Activated CD8-positive, alpha-beta T cell treated with anti-CD3 and anti-CD28 coated beads for 36 hours (primary cell): ENCODE measurements at regions of chr1 and their contacts with region 1.

Region 1: DNA sequence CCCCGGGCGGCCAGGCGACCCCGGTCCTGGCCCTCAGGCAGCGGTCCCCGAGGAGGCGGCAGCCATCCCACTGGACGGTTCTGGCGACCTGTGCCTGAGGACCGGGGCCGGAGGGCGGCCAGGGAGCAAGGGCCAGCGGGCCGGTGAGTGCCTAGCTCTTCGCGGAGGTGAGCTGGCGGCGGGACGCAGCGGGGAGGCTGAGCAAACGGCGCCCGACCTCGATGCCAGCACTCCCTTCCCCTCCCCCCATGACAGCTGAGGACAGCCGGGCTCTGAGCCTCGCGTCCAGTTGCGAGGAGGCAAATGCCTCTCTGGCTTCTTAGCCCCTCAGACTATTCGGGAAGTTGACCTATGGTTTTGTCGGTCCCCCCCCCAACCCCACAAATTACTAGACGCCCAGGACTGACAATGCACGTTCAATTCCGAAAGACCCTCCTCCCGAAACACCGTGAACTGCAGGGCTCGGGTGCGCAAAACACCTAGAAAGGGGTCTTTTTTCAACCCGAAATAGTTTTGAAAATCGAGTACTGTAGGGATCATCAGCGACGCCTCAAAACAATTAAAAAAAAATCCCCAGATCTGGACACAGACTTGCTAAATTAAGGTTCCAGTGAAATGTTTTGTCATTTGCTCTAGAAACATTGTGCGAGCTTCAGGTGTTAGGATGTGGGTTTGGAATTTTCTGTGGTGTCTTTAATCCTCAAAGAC is 8.3 kb downstream of the CDKN2C start:
- DNase-seq: peak; percentile 53
- ATAC-seq: peak; percentile 61
- H3K4me3 Mint-ChIP-seq: peak overlapping the region; percentile 78
- H3K27ac Mint-ChIP-seq: peak overlapping the region; percentile 63
- H3K4me1 Mint-ChIP-seq: peaks cover 21% of the 10 kb centered on the region
- H3K27me3 Mint-ChIP-seq: peaks cover 19% of the 10 kb centered on the region
- CTCF ChIP-seq: no peak

Region 2: GRCh38 chr1:50658459-50659076 is 319.7 kb before region 1 on chr1:
- CTCF ChIA-PET with region 1: no interaction called
- POLR2A ChIA-PET with region 1: no interaction called
- intact Hi-C with region 1: no loop called
- DNase-seq: no peak
- ATAC-seq: no peak
- H3K4me3 Mint-ChIP-seq: no peak overlapping the region
- H3K27ac Mint-ChIP-seq: no peak overlapping the region
- H3K4me1 Mint-ChIP-seq: peaks cover 4% of the 10 kb centered on the region
- H3K27me3 Mint-ChIP-seq: no peaks in the 10 kb centered on the region
- CTCF ChIP-seq: no peak

Region 3: DNA sequence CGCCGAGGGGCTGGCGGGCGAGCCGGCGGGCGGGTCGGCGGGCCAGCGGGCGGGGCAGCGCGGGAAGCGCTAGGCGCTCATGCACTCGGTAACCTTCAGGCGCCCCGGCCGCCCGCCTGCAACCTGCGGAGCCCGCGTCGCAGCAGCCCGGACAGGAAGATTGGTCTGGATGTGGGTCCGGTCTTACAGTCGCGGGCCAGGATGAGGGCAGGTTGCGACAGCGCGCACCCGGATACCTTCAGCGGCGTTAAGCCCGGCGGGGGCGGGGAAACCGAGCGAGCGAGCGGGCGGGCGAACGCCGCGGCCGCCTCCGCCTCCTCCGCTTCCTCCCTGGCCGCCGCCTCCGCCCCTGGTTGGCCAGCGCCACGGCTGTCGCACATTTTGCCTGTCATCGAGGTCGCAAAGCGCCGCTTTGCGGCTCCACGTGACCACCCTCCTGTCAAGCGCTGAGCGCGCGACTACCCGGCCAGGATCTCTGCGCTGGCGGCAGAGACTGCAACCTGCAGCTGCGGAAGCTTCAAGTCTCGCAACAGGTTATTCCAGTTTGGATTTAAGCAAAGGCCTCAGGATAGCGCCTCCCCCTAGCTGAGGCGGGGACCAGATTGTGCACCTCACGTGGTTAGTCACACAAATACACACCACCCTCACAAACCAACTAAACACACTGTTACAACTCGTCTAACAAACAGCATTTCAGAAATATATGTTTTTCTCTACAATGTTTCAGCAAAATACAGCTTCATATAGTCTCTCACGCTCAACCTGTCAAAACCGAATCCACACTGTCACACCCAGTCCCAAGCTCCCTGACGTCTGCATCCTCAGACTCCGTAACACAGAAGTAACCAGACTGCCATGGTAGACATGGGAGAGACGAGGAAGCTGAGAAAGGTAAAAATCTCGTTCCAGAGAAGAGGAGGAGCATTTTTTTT is 18.1 kb before region 1 on chr1 and contains the start of gene FAF1:
- CTCF ChIA-PET with region 1: interaction called, 5 read pairs
- POLR2A ChIA-PET with region 1: interaction called, 27 read pairs
- intact Hi-C with region 1: no loop called
- DNase-seq: peak; percentile 96
- ATAC-seq: peak; percentile 89
- H3K4me3 Mint-ChIP-seq: peak within 1 kb of the TSS; percentile 88
- H3K27ac Mint-ChIP-seq: peak within 1 kb of the TSS; percentile 91
- H3K4me1 Mint-ChIP-seq: peaks cover 21% of the 10 kb centered on the region
- H3K27me3 Mint-ChIP-seq: no peaks in the 10 kb centered on the region
- CTCF ChIP-seq: peak; percentile 23
- total RNA-seq, gene FAF1: 82.2 to 87.0 TPM

Region 4: DNA sequence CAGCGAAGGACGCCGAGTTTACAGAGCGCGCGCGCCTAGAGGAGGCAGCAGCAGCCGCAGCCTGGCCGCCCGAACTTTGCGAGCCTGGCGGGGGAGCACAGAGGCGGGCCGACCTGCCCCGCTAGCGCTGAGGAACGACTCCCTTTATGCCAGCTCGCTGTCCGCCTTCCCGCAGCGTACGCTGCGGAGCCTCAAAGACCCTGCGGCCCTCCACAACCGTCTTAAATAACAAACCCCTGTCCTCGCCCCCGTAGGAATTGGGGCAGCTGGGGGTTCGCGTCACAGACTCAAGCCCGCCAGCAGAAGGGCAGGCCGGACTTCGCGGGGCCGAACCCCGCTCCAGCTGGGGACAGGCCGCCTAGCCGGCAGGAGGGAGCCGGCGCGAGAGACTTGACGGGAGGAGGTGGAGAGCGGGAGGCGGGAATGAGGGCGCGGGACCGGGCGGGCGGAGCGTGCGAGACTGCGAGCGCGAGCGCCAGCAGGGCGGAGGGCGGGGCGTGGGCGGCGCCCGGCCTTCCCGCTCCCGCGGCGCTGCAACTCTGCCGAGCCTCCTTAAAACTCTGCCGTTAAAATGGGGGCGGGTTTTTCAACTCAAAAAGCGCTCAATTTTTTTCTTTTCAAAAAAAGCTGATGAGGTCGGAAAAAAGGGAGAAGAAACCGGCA is 10.0 kb before region 1 on chr1:
- CTCF ChIA-PET with region 1: interaction called, 5 read pairs
- POLR2A ChIA-PET with region 1: interaction called, 35 read pairs
- intact Hi-C with region 1: no loop called
- DNase-seq: peak; percentile 82
- ATAC-seq: peak; percentile 80
- H3K4me3 Mint-ChIP-seq: peak overlapping the region; percentile 88
- H3K27ac Mint-ChIP-seq: peak overlapping the region; percentile 96
- H3K4me1 Mint-ChIP-seq: peaks cover 21% of the 10 kb centered on the region
- H3K27me3 Mint-ChIP-seq: peaks cover 1% of the 10 kb centered on the region
- CTCF ChIP-seq: peak; percentile 5